ENCODE measurements at regions of chr15 and their contacts with region 1.

Region 1: DNA sequence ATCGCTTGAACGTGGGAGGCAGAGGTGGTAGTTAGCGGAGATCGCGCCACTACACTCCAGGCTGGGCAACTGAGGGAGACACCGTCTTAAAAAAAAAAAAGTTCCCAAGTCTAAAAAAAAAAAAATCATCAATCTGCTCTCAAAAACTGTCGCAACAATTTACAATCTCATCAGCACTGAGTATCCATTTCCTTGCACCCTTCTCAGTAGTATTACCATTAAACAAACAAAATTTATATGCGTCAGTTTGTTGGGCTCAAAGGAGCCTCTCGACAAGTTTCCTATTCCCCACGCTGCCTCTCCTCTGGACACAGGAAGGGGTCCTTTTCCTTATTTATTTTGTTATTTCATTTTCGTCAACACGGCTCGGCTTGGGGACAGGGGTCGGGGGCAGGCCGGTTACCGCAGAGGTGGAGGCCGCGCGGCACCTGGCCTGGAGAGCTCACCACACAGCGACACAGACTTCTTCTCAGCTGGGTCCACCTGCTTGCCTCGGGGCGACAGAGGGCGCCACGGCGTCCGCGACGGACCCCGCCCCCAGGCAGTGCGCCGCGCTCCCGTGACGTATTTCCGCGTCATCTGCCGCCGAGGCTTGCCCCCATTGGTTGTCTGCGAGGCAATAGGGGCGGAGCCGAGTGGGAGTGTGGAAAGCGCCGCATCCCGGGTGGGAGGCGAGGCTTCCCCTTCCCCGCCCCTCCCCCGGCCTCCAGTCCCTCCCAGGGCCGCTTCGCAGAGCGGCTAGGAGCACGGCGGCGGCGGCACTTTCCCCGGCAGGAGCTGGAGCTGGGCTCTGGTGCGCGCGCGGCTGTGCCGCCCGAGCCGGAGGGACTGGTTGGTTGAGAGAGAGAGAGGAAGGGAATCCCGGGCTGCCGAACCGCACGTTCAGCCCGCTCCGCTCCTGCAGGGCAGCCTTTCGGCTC is at the start of gene MAP2K1:
- DNase-seq: peak; percentile 97 to 98 (median 98)
- ATAC-seq: peak; percentile 97
- H3K4me3 ChIP-seq: peak within 1 kb of the TSS; percentile 81
- H3K4me3 Mint-ChIP-seq: peak within 1 kb of the TSS; percentile 87 to 100 (median 98)
- H3K27ac ChIP-seq: peak within 1 kb of the TSS; percentile 85
- H3K27ac Mint-ChIP-seq: peak within 1 kb of the TSS; percentile 91 to 100 (median 99)
- H3K4me1 ChIP-seq: peaks cover 33 to 39% of the 10 kb centered on the region in 2 donors
- H3K4me1 Mint-ChIP-seq: peaks cover 42 to 61% (median 53%) of the 10 kb centered on the region in 7 donors
- H3K27me3 ChIP-seq: no peaks in the 10 kb centered on the region
- H3K27me3 Mint-ChIP-seq: no peaks in the 10 kb centered on the region
- total RNA-seq, gene MAP2K1: 37.7 to 97.2 (median 47.5) TPM

Region 2: DNA sequence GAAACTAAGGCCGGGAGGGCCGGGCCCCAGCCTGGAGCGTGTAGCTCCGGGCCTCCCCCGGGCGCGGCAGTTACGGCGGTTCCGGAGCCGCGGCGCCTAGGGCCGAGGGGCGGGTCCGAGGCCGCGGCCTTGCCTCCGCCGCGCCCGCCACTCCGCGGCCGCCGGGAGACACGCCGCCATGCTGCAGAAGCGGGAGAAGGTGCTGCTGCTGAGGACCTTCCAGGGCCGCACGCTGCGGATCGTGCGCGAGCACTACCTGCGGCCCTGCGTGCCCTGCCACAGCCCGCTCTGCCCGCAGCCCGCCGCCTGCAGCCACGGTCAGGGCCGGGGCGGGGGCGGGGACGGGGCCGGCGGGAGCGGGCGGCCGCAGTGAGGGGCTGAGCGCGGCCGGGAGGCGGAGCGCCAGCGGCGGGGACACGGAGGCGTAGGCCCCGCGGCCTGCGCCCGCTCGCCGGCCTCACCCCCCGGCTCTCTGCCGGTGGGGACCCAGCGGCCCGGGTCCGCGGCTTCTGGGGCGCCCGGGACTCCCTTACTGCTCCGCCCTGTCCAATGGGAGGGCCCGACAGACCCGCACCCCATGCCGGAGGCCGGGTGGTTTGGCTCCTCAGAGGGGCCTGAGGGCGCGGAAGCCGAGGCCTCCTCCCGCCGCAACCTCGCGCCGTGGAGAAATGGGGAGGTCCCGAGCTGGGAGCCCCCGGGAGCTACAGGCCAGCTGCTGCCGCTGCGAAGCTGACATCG is 92.9 kb before region 1 on chr15 and contains the start of gene DIS3L:
- CTCF ChIA-PET with region 1: no interaction called
- POLR2A ChIA-PET with region 1: no interaction called
- intact Hi-C with region 1: loop called (anchors 1 to 2 kb)
- DNase-seq: peak; percentile 55 to 80 (median 69)
- ATAC-seq: peak; percentile 85
- H3K4me3 ChIP-seq: peak within 1 kb of the TSS; percentile 69
- H3K4me3 Mint-ChIP-seq: peak within 1 kb of the TSS; percentile 82 to 93 (median 89)
- H3K27ac ChIP-seq: peak within 1 kb of the TSS; percentile 84
- H3K27ac Mint-ChIP-seq: peak within 1 kb of the TSS; percentile 86 to 97 (median 96)
- H3K4me1 ChIP-seq: peaks cover 13 to 31% of the 10 kb centered on the region in 2 donors
- H3K4me1 Mint-ChIP-seq: peaks cover 20 to 57% (median 48%) of the 10 kb centered on the region in 7 donors
- H3K27me3 ChIP-seq: no peaks in the 10 kb centered on the region
- H3K27me3 Mint-ChIP-seq: peaks cover 0 to 4% (median 0%) of the 10 kb centered on the region in 5 donors
- total RNA-seq, gene DIS3L: 34.3 to 40.2 (median 38.1) TPM

Region 3: DNA sequence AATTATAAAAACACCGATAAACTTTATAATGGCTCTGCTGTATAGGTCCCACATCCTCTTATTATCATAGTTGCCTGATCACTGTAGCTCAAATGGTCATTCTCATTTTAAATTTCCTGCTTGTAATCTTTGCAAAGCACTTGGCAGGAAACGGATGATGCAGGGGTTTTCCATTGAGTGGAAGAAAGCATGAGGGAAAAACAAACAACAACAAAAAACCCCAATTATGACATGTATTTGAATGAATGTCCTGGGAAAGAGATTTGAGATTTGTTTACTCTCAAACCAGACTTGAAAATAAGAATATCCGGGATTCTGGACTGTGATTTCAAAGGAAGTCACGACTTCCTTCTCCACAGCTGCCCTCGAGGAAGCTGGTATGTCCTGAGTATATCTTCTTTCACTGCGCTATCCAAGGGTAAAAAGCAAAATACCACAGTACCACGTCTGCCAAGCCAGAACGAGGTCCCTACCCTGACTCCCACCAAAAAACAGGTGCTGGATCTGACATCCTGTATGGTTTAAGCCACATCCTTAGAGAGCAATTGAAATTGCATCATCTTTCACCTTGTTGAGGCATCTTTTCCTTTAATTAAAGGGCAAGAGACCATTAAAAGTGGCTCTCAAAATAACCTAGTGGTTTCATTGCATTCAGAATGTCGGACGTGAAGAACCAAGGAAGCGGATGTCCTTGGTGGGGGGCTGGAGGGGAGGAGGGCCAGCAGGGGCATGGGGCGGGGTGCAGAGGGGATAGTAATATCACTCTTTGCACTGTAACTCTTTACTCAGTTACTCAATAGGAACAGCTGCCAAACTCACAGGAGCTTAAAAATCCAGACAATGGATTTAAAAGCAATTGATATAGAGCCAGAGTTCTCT is 16.5 kb before region 1 on chr15:
- CTCF ChIA-PET with region 1: no interaction called
- POLR2A ChIA-PET with region 1: no interaction called
- intact Hi-C with region 1: loop called in 1 of 2 experiments (anchors 1 kb)
- DNase-seq: peak in 1 of 9 donors; percentile 29
- ATAC-seq: peak; percentile 50
- H3K4me3 ChIP-seq: peak overlapping the region; percentile 48
- H3K4me3 Mint-ChIP-seq: peak overlapping the region; percentile 3 to 87 (median 80)
- H3K27ac ChIP-seq: peak overlapping the region; percentile 52
- H3K27ac Mint-ChIP-seq: peak overlapping the region; percentile 53 to 93 (median 84)
- H3K4me1 ChIP-seq: peaks cover 7 to 11% of the 10 kb centered on the region in 2 donors
- H3K4me1 Mint-ChIP-seq: peaks cover 10 to 22% (median 15%) of the 10 kb centered on the region in 7 donors
- H3K27me3 ChIP-seq: no peaks in the 10 kb centered on the region
- H3K27me3 Mint-ChIP-seq: no peaks in the 10 kb centered on the region

Region 4: DNA sequence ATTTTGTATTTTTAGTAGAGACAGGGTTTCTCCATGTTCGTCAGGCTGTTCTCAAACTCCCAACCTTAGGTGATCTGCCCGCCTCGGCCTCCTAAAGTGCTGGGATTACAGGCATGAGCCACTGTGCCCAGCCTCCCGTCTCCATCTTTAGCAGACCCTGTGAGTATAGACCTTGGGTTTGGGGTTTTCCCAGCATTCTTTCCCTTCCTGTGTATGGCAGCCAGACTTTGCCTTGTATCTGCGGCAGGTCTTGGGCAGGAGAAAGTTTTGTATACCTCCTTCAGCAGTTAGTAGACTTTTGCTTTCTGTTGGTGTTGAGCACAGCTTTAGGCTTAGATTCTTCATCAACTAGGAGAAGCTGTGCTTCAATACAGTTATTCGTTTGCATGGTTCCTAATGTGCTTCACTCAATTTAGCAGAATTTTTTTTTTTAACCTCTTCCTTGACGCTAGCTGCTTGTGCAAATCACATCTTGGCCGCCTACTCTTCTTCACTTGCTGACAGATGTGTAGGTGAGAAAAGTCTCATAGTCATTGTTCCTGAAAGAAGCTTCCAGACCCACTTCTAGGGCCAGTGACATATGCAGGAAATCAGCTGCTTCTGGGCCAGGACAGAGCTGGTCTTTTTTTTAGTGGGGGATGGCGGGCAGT is 38.6 kb after region 1 on chr15:
- CTCF ChIA-PET with region 1: interaction called, 4 read pairs
- POLR2A ChIA-PET with region 1: interaction called, 3 read pairs
- intact Hi-C with region 1: loop called in 1 of 2 experiments (anchors 5 kb)
- DNase-seq: no peak
- ATAC-seq: no peak
- H3K4me3 ChIP-seq: no peak overlapping the region
- H3K4me3 Mint-ChIP-seq: peak overlapping the region; percentile 27 to 58 (median 52)
- H3K27ac ChIP-seq: no peak overlapping the region
- H3K27ac Mint-ChIP-seq: peak overlapping the region; percentile 11 to 83 (median 64)
- H3K4me1 ChIP-seq: peaks cover 0 to 11% of the 10 kb centered on the region in 2 donors
- H3K4me1 Mint-ChIP-seq: peaks cover 41 to 72% (median 61%) of the 10 kb centered on the region in 7 donors
- H3K27me3 ChIP-seq: no peaks in the 10 kb centered on the region
- H3K27me3 Mint-ChIP-seq: no peaks in the 10 kb centered on the region

Region 5: DNA sequence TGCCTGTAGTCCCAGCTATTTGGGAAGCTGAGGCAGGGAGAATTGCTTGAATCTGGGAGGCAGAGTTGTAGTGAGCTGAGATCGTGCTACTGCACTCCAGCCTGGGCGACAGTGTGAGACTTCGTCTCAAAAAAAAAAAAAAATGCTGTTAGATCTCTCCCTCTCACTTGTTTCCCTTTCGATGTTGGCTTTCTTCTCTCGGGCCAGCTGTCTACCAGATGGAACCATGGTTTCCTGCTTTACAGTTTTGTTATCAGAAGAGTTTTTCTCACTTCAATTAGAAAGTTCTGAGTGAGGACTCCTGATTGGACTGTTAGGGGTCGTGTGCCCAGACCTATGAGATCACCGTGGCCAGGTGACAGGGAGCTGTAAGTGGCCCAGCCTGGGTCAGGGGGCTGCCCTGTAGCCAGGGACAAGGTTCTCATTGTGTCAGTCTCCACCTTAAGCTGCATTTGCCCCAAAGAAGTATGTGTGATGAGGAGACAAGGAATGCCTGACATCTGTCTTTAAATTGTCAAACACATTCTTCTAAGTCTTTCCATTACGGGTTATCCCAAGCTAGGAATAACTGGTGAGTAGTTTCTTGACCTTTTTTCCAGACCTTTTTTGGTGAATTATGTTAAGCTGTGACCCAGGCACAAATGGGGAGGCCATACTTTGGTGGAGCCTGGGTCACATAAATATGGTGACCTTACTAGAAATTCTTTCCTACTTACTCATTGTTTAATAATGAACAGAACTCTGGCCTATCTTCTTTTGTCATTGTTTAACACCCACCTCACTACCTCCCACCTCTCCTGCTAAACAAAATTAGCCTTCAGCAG is 85.9 kb after region 1 on chr15:
- CTCF ChIA-PET with region 1: interaction called, 3 read pairs
- POLR2A ChIA-PET with region 1: interaction called, 7 read pairs
- intact Hi-C with region 1: loop called (anchors 1 kb)
- DNase-seq: peak; percentile 17 to 83 (median 79)
- ATAC-seq: peak; percentile 95
- H3K4me3 ChIP-seq: peak overlapping the region; percentile 22
- H3K4me3 Mint-ChIP-seq: peak overlapping the region; percentile 64 to 94 (median 82)
- H3K27ac ChIP-seq: peak overlapping the region; percentile 45
- H3K27ac Mint-ChIP-seq: peak overlapping the region; percentile 86 to 99 (median 95)
- H3K4me1 ChIP-seq: peaks cover 20 to 21% of the 10 kb centered on the region in 2 donors
- H3K4me1 Mint-ChIP-seq: peaks cover 26 to 62% (median 57%) of the 10 kb centered on the region in 7 donors
- H3K27me3 ChIP-seq: no peaks in the 10 kb centered on the region
- H3K27me3 Mint-ChIP-seq: no peaks in the 10 kb centered on the region

Region 6: GRCh38 chr15:66504563-66505429 is 118.3 kb after region 1 on chr15 and contains the starts of genes RPL4 and ZWILCH:
- CTCF ChIA-PET with region 1: interaction called, 62 read pairs
- POLR2A ChIA-PET with region 1: interaction called, 71 read pairs
- intact Hi-C with region 1: loop called in 1 of 2 experiments (anchors 2 kb)
- DNase-seq: peak; percentile 65 to 88 (median 83)
- ATAC-seq: peak; percentile 93
- H3K4me3 ChIP-seq: peak within 1 kb of the TSS; percentile 99
- H3K4me3 Mint-ChIP-seq: peak within 1 kb of the TSS; percentile 90 to 100 (median 100)
- H3K27ac ChIP-seq: peak within 1 kb of the TSS; percentile 93
- H3K27ac Mint-ChIP-seq: peak within 1 kb of the TSS; percentile 92 to 100 (median 99)
- H3K4me1 ChIP-seq: peaks cover 13 to 22% of the 10 kb centered on the region in 2 donors
- H3K4me1 Mint-ChIP-seq: peaks cover 21 to 57% (median 41%) of the 10 kb centered on the region in 7 donors
- H3K27me3 ChIP-seq: no peaks in the 10 kb centered on the region
- H3K27me3 Mint-ChIP-seq: no peaks in the 10 kb centered on the region
- total RNA-seq, gene RPL4: 2,229 to 4,292 (median 4,136) TPM
- total RNA-seq, gene ZWILCH: 5.6 to 20.3 (median 6.8) TPM

Region 7: GRCh38 chr15:67254238-67255175 is 868.0 kb after region 1 on chr15 and contains the starts of genes AAGAB and IQCH:
- CTCF ChIA-PET with region 1: no interaction called
- POLR2A ChIA-PET with region 1: no interaction called
- intact Hi-C with region 1: loop called in 1 of 2 experiments (anchors 5 kb)
- DNase-seq: peak; percentile 81 to 98 (median 91)
- ATAC-seq: peak; percentile 99
- H3K4me3 ChIP-seq: peak within 1 kb of the TSS; percentile 69
- H3K4me3 Mint-ChIP-seq: peak within 1 kb of the TSS; percentile 87 to 100 (median 96)
- H3K27ac ChIP-seq: peak within 1 kb of the TSS; percentile 84
- H3K27ac Mint-ChIP-seq: peak within 1 kb of the TSS; percentile 86 to 99 (median 95)
- H3K4me1 ChIP-seq: peaks cover 4 to 13% of the 10 kb centered on the region in 2 donors
- H3K4me1 Mint-ChIP-seq: peaks cover 25 to 52% (median 41%) of the 10 kb centered on the region in 7 donors
- H3K27me3 ChIP-seq: no peaks in the 10 kb centered on the region
- H3K27me3 Mint-ChIP-seq: peaks cover 0 to 25% (median 0%) of the 10 kb centered on the region in 5 donors
- total RNA-seq, gene AAGAB: 19.5 to 44.9 (median 22.3) TPM
- total RNA-seq, gene IQCH: 0.22 to 1.9 (median 0.84) TPM

Region 8: GRCh38 chr15:68256675-68257450 is 1870.4 kb after region 1 on chr15:
- CTCF ChIA-PET with region 1: no interaction called
- POLR2A ChIA-PET with region 1: no interaction called
- intact Hi-C with region 1: no loop called
- DNase-seq: peak; percentile 49 to 76 (median 62)
- ATAC-seq: peak; percentile 83
- H3K4me3 ChIP-seq: peak overlapping the region; percentile 44
- H3K4me3 Mint-ChIP-seq: peak overlapping the region; percentile 65 to 84 (median 80)
- H3K27ac ChIP-seq: peak overlapping the region; percentile 55
- H3K27ac Mint-ChIP-seq: peak overlapping the region in 8 of 9 donors; percentile 18 to 83 (median 57)
- H3K4me1 ChIP-seq: peaks cover 0 to 13% of the 10 kb centered on the region in 2 donors
- H3K4me1 Mint-ChIP-seq: peaks cover 6 to 28% (median 11%) of the 10 kb centered on the region in 7 donors
- H3K27me3 ChIP-seq: no peaks in the 10 kb centered on the region
- H3K27me3 Mint-ChIP-seq: peaks cover 0 to 17% (median under 1%) of the 10 kb centered on the region in 5 donors

Measured in naive thymus-derived CD4-positive, alpha-beta T cell (primary cell).